ENCODE measurements at regions of chr9 and their contacts with region 1.

Region 1: DNA sequence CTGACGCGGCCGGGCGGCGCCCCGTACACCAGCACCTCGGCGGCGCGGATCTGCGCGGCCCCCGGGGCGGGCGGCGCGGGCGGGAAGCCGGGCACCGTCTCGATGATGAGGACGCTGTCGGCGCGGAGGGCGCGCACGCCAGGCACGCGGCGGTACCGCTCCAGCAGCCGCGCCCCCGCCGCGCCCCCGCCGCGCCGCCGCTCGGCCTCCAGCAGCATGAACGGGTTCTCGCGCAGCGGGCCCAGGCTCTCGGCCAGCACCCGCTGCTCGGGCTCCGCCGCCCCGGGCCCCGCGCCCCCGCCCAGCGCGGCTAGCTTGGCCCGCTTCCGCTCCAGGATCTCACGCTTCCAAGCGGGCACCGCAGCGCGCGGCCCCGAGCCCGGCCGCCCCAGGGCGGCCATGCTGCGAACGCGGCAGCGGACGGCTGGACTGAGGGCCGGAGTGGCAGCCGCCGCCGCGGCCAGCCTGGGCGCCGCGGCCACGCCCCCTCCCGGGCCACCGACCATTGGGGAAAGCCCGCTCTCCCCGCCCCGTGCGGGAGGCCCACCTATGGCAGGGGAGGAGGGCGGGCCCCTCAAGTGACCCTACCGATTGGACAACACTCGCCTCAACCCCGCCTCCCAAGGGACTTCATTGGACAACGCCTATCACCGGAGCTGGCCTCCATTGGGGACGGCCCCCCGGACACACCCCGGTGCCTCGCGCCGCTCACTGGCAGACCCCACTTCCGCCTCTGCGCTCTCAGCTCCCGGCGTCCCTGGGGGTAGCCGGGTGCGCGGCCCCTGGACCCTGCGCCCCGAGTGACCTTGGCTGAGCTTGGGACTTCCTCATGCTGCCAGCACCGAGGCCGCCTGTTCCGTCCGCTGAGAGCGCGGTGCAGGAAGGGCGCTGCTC is at the start of gene TPRN:
- DNase-seq: peak; percentile 99 to 100
- ATAC-seq: peak; percentile 95 to 99 (median 98)
- H3K4me3 ChIP-seq: peak within 1 kb of the TSS; percentile 42 to 84 (median 72)
- H3K27ac ChIP-seq: peak within 1 kb of the TSS; percentile 48 to 96 (median 90)
- H3K4me1 ChIP-seq: peaks cover 50 to 86% (median 76%) of the 10 kb centered on the region in 9 donors
- H3K27me3 ChIP-seq: no peaks in the 10 kb centered on the region
- CTCF ChIP-seq: no peak
- total RNA-seq, gene TPRN: 10.2 to 31.5 (median 21.7) TPM

Region 2: GRCh38 chr9:137188490-137189296 is 11.9 kb before region 1 on chr9 and contains the starts of genes ANAPC2 and SSNA1:
- intact Hi-C with region 1: loop called in 1 of 10 experiments (anchors 1 kb)
- DNase-seq: peak; percentile 90 to 96
- ATAC-seq: peak; percentile 88 to 95 (median 91)
- H3K4me3 ChIP-seq: peak within 1 kb of the TSS; percentile 75 to 99 (median 98)
- H3K27ac ChIP-seq: peak within 1 kb of the TSS; percentile 94 to 100 (median 98)
- H3K4me1 ChIP-seq: peaks cover 28 to 62% (median 47%) of the 10 kb centered on the region in 9 donors
- H3K27me3 ChIP-seq: no peaks in the 10 kb centered on the region
- CTCF ChIP-seq: peak in 6 of 9 donors; percentile 9 to 52 (median 39)
- total RNA-seq, gene ANAPC2: 24.6 to 44.8 (median 27.7) TPM
- total RNA-seq, gene SSNA1: 47.3 to 73.5 (median 56.7) TPM

Region 3: DNA sequence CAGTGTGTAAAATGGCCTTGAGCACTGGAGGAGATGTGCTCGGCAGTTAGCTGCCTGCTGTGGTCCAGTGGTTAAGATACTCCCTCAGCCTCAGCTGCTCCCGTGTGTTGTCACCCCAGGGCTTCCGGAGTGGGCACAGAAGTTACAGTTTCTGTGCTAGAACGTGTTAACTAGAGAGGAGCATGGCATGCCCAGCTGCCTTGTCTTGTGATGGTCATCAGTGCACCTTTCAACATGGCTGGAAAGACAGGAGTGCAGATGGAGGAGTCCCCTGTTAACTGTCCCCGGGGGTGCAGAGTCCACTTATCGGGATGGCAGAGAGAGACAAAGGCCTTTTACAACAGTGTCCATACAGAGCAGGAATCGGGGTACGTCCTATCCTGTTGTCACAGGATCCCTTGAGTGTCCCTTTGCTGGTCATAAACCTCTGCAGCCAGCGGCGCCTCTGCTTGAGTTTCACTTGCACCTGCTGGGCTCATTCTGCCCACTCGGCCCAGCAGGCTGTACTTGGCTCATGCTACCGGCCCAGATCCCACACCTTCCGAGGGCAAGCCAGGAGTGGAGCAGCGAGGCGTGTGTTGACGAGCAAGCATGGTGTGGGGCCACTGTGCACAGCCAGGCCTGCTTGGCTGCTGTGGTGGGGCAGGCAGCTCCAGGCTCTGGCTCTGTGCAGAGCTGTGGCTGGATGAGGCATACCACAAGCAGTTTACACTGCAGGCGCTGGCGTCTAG is 530.8 kb after region 1 on chr9:
- intact Hi-C with region 1: loop called in 1 of 10 experiments (anchors 5 kb)
- DNase-seq: no peak
- ATAC-seq: peak in 2 of 8 donors; percentile 24 to 44
- H3K4me3 ChIP-seq: no peak overlapping the region
- H3K27ac ChIP-seq: no peak overlapping the region
- H3K4me1 ChIP-seq: no peaks in the 10 kb centered on the region
- H3K27me3 ChIP-seq: no peaks in the 10 kb centered on the region
- CTCF ChIP-seq: no peak

Measured in heart right ventricle (tissue), 16 donors.